ENCODE measurements at regions of chr4 and their contacts with region 1.

Region 1: GRCh38 chr4:2934813-2935761 is 28.1 kb downstream of the NOP14 start:
- DNase-seq: peak; percentile 98

Region 2: DNA sequence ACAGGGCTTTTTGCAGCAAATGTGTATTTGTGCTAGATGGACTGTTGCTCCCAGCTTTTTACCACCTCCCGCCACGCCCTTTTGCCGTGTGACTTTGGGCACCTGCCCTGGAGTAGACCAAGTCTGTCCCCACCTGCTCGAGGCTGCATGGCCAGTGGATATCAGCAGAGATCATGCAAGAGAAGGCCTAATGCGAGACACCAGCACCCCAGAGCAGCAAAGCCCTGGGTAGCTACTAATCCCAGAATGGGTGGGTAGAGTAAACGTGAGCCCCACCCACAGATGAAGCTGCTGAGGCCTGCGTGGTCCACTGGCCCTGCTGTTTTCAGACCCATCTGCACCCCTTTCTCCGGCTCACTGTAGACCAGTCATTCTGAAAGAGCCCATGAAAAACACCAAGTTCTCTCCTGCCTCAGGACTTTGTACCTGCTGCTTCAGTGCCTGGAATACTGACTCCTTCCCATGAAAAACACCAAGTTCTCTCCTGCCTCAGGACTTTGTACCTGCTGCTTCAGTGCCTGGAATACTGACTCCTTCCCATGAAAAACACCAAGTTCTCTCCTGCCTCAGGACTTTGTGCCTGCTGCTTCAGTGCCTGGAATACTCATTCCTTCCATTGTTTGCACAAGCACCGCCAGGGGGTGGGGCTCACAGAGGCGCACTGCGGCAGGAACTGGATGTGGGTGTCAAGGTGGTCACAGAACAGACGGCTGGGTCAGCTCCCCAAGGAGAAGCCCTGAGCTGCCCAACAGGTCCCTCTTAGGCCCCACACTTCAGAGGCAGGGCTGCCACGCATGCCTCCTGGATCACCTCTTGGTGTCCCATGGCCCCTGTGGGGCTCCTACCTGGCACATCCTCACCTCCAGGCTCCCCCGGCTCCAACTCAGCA is 173.8 kb before region 1 on chr4:
- intact Hi-C with region 1: loop called (anchors 5 to 10 kb)
- DNase-seq: peak; percentile 84

Region 3: DNA sequence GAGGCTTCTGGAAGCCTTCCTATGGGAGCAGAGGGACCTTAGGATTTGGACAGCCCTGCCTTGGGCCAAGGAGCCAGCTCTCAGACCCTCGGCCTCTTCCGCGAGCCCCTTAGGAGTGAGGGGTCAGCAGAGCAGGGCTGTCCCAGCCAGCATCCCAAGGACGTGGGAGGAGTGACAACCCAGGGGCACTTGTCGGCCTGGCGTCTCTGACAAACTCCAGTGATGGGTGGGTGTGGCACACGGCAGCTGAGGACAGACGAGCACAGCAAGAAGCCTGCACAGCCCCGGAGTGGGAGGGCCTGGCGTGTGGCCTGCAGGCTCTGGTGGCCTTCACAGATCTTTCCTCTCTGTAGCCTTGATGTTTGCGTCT is 167.4 kb before region 1 on chr4:
- intact Hi-C with region 1: loop called (anchors 5 to 10 kb)
- DNase-seq: peak; percentile 68

Region 4: DNA sequence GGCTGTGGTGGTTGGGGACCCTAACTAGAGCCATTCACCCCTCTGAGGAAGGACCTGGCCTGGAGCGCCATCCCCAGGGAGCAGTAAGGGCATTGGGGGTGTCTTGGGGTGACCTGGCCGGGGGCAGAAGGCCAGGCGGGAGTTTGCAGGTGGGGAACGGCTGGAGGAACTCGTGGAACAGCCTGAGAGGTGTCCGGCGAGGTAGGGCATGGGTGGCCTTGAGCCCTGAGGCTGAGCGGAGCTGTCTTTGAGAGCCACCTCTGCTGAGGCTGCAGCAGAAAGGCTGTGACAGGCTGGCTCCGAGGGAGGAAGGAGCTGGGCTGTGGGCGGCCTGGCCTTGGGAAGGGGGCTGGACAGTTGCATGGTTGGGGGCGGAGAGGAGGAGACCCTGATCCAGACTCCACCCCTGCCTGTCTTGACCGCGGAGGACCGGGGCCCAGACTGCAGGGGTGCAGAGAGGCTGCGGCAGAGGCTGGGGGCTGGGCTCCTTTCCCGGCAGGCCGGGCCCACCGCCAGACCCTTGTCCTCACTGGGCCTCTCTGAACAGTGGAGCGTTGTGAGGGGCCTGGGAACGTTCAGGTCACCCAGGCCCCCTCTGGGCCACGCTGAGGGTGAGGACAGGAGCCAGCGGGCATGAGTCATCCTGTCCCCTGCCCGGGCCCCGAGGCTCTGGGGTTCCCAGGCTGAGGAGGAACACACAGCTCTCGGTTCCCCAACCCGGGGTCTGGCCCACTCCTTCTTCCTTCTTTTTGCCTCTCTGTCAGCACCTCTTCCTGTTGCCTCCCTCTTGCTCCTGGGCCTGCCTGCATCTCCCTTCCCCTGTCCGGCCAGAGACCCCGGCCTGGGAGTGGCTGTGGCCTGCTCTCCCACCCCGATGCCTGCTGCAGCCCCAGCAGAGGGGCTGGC is 134.1 kb before region 1 on chr4:
- intact Hi-C with region 1: loop called in 1 of 2 experiments (anchors 1 kb)
- DNase-seq: peak; percentile 93

Region 5: GRCh38 chr4:3257556-3258482 is 322.7 kb after region 1 on chr4:
- intact Hi-C with region 1: no loop called
- DNase-seq: peak; percentile 78